Right lobe of liver (tissue), 6 donors: ENCODE measurements at regions of chrX and their contacts with region 1.

Region 1: GRCh38 chrX:109624641-109625616 is at the start of gene KCNE5:
- DNase-seq: peak in 2 of 3 donors; percentile 21 to 51
- ATAC-seq: peak in 2 of 4 donors; percentile 22 to 39
- H3K4me3 ChIP-seq: no peak within 1 kb of the TSS
- H3K27ac ChIP-seq: no peak within 1 kb of the TSS
- H3K4me1 ChIP-seq: no peaks in the 10 kb centered on the region
- H3K27me3 ChIP-seq: no peaks in the 10 kb centered on the region
- CTCF ChIP-seq: no peak
- POLR2A ChIP-seq: no peak
- total RNA-seq, gene KCNE5: 0.16 to 0.27 TPM in 2 of 6 experiments, not detected in the others

Region 2: GRCh38 chrX:109498434-109498833 is 126.5 kb before region 1 on chrX:
- intact Hi-C with region 1: loop called in 1 of 2 experiments (anchors 10 kb)
- DNase-seq: no peak
- ATAC-seq: no peak
- H3K4me3 ChIP-seq: no peak overlapping the region
- H3K27ac ChIP-seq: no peak overlapping the region
- H3K4me1 ChIP-seq: no peaks in the 10 kb centered on the region
- H3K27me3 ChIP-seq: peaks cover 6 to 25% of the 10 kb centered on the region in 2 donors
- CTCF ChIP-seq: no peak
- POLR2A ChIP-seq: no peak

Region 3: DNA sequence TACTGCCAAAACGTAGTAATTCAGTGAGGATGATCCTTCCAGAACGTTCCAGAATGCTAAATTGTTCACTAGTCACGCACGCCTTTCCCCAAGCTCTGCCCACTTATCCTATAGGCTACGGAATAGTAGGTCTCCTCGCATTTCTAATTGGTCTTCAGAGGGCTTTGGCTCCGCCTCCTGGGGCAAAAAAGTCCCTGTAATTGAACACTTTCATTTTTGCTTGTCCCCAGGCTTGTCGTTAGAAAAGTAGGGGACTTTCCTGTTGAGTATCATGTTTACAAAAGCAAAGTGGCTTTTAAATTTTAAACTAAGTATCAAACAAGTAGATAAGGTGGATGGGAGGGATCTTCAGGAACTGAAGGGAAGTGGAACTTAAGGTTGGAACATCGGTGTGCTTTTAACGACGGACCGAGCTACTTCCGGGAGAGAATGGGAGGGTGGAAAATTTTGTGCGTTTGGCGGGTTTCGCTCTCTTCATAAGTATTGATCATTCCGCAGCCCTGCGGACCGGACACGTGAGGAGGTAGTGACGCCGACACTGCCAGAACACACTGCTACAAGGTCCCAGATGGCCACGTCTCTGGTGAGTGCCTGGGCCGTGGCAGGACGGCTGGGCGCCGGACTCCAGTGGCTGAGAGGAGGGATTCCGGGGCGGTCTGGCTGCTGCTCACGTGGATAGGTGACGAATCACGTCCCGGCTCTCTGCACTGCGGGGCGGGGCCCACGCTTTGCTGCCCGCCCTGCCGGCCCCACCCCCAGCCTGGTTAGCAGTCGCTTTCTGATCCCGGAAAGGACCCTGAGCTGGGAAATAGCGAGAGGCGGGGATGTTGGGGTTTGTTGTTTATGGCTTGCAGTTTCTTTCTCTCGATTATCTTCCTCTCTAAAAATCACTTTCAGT is 88.2 kb before region 1 on chrX and contains the start of gene NXT2:
- intact Hi-C with region 1: no loop called
- DNase-seq: peak; percentile 92 to 95 (median 93)
- ATAC-seq: peak; percentile 99 to 100 (median 100)
- H3K4me3 ChIP-seq: peak within 1 kb of the TSS; percentile 36 to 60 (median 46)
- H3K27ac ChIP-seq: peak within 1 kb of the TSS; percentile 75 to 92 (median 83)
- H3K4me1 ChIP-seq: no peaks in the 10 kb centered on the region
- H3K27me3 ChIP-seq: peaks cover 0 to 7% of the 10 kb centered on the region in 2 donors
- CTCF ChIP-seq: no peak
- POLR2A ChIP-seq: peak; percentile 69
- total RNA-seq, gene NXT2: 4.1 to 6.5 (median 4.4) TPM

Region 4: GRCh38 chrX:109660435-109661143 is 35.7 kb after region 1 on chrX:
- intact Hi-C with region 1: no loop called
- DNase-seq: no peak
- ATAC-seq: no peak
- H3K4me3 ChIP-seq: no peak overlapping the region
- H3K27ac ChIP-seq: no peak overlapping the region
- H3K4me1 ChIP-seq: no peaks in the 10 kb centered on the region
- H3K27me3 ChIP-seq: peaks cover 0 to 7% of the 10 kb centered on the region in 2 donors
- CTCF ChIP-seq: no peak
- POLR2A ChIP-seq: no peak